ENCODE measurements at regions of chr9 and their contacts with region 1.

Region 1: GRCh38 chr9:71431931-71432330 is 310.5 kb upstream of the TRPM3 start:
- DNase-seq: no peak
- H3K4me3 ChIP-seq: no peak overlapping the region
- H3K27ac ChIP-seq: no peak overlapping the region
- H3K4me1 ChIP-seq: no peaks in the 10 kb centered on the region
- CTCF ChIP-seq: no peak

Region 2: DNA sequence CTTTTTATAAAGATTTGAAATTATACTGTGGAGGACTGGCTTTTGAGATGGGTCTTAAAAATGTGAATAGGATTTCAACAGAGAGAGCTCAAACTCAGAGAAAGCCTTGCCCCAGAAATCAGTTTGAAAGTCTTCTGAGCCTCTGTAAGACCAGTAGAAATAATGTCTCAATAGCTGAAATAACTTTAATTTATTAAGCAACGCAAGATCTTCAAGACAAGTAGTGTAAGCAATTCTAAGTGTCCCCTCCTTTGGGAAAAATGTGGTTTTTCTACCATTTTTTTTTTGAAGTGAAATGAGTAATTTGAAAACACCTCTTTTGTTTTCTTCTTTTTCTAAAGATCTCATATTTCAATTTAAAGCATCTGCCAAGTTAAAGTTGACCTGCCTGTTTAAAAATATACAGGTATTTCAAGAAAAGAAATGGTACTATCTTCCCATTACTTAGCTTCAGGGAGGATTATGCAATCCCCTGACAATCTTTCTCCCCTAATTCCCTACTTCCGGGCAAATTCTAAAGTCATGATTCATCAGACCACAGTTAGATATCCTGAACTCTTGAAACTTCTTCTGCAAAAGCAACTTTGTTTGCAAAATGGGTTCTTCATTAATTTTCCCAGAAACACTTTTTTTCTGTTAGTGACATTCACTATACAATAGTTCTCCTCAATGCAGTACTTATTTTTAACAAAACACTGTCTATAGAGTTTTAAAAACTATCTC is 1711.8 kb after region 1 on chr9:
- CTCF ChIA-PET with region 1: no interaction called
- POLR2A ChIA-PET with region 1: interaction called, 10 read pairs
- intact Hi-C with region 1: no loop called
- DNase-seq: no peak
- H3K4me3 ChIP-seq: no peak overlapping the region
- H3K27ac ChIP-seq: no peak overlapping the region
- H3K4me1 ChIP-seq: peaks cover 3% of the 10 kb centered on the region
- CTCF ChIP-seq: no peak